Posterior vena cava (tissue), 2 donors: ENCODE measurements at regions of chr16 and their contacts with region 1.

Region 1: GRCh38 chr16:2720719-2721633 is 952 bp upstream of the PRSS27 start:
- DNase-seq: peak; percentile 95

Region 2: DNA sequence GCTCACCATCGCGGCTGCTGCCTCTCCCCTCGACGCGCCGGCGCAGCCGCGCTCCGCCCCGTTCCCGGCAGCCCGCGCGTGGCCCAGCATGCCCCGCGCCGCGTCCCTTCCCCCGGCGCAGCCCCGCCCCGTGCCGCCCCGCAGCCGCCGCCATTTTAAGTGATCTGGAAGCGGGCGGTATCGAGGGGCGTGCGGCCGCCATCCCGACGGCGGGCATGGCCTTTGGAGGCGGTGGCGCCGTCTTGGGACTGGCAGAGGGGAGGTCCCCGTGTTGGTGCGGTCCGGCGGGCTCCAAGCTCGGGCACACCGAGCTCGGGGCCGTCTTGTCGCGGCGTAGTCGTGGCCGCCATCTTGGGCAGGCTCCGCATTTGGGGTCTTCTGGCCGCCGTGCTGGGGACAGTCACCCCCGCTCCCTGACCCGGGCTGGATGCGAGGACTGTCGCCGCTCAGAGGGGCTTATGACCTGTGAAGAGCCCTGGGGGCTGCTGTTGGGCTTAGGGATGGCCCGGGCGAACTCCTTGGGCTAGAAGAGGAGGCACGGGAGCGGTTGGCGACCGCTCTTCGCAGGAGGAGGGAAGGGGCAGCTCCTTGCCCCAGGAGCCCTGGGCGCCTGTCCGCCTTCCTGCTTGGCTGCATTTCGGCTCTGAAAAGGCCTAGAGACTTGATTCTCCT is 56.4 kb after region 1 on chr16 and contains the start of gene ELOB:
- intact Hi-C with region 1: loop called in 1 of 2 experiments (anchors 2 kb)
- DNase-seq: peak; percentile 97
- total RNA-seq, gene ELOB: 182 to 196 TPM

Region 3: GRCh38 chr16:2854700-2855309 is 133.8 kb after region 1 on chr16:
- intact Hi-C with region 1: loop called in 1 of 2 experiments (anchors 10 kb)
- DNase-seq: peak; percentile 24